ENCODE measurements at regions of chr6 and their contacts with region 1.

Region 1: DNA sequence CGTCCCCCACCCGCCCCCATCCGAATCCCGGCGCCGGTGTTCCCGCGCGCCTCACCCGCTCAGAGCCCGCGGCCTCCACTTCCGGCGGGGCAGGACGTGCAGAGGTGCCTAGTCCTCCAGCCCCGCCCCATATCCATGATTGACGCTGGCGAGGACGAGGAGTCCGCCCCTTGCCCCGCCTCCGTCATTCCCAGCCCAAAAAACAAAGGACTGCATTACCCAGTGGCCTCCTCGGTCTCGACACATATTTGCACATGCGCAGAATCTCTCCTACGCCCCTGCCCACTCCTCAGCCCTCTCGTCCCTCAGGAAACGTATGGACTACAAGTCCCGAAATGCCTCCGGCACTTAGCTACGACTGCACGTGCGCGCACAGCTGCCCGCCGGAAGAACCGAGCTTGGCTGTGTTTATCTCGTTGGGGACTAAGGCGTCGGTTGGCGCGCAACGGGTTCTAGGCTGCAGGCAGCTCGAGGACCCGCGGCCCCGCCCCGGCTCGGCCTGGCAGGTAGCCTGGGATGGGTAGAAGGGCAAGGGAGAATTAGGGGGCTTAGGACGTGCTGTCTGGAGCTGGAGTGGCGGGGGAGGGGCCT is at the starts of genes KLHDC3 and MEA1:
- DNase-seq: peak; percentile 100
- H3K4me3 Mint-ChIP-seq: peak within 1 kb of the TSS; percentile 93
- H3K27ac Mint-ChIP-seq: peak within 1 kb of the TSS; percentile 82
- H3K4me1 Mint-ChIP-seq: peaks cover 62% of the 10 kb centered on the region
- H3K27me3 Mint-ChIP-seq: no peaks in the 10 kb centered on the region
- total RNA-seq, gene KLHDC3: 64.6 to 68.7 TPM
- total RNA-seq, gene MEA1: 56.6 to 60.6 TPM

Region 2: GRCh38 chr6:42978839-42979522 is 35.0 kb before region 1 on chr6 and contains the start of gene PEX6:
- CTCF ChIA-PET with region 1: interaction called, 9 read pairs
- POLR2A ChIA-PET with region 1: interaction called, 40 read pairs
- DNase-seq: peak; percentile 97
- H3K4me3 Mint-ChIP-seq: peak within 1 kb of the TSS; percentile 88
- H3K27ac Mint-ChIP-seq: peak within 1 kb of the TSS; percentile 99
- H3K4me1 Mint-ChIP-seq: peaks cover 51% of the 10 kb centered on the region
- H3K27me3 Mint-ChIP-seq: no peaks in the 10 kb centered on the region
- total RNA-seq, gene PEX6: 27.4 to 29.1 TPM

Region 3: GRCh38 chr6:42984001-42984923 is 29.7 kb before region 1 on chr6 and contains the start of gene PPP2R5D:
- CTCF ChIA-PET with region 1: interaction called, 9 read pairs
- POLR2A ChIA-PET with region 1: interaction called, 40 read pairs
- DNase-seq: peak; percentile 99
- H3K4me3 Mint-ChIP-seq: peak within 1 kb of the TSS; percentile 88
- H3K27ac Mint-ChIP-seq: peak within 1 kb of the TSS; percentile 82
- H3K4me1 Mint-ChIP-seq: peaks cover 55% of the 10 kb centered on the region
- H3K27me3 Mint-ChIP-seq: no peaks in the 10 kb centered on the region
- total RNA-seq, gene PPP2R5D: 56.8 to 59.3 TPM

Region 4: DNA sequence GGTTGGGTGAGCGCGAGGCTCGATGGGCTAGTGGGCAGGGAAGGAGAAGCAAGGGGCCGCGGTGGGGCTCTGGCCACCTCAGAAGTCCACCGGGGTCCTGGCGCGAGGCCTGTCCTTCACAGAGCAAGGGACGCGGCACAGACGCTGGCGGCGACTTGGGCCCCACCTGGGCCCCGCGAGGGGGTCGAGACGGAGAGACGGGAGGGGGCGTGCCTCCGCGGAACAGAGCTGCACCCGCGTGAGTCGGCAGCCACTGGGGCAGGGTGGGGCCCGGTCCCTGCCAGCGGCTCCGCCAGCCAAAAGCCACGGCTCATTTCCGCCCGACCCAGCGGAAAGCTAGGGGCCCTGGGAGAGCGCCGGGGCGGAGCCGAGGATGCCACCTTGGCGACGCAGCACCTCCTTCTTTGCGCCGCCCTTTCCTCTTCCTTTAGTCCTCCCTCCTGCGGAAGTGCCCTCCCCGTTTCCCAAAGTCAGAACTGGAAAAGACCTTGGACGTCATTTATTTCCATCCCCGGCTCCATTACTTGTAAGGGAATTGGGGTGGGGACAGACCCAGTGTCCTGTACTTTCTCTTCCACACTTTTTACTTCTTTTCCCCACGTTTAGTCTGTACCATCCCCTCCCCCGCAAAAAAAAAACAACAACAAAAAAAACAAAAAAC is 39.7 kb after region 1 on chr6 and contains the start of gene CUL7:
- CTCF ChIA-PET with region 1: interaction called, 5 read pairs
- POLR2A ChIA-PET with region 1: interaction called, 18 read pairs
- DNase-seq: peak; percentile 95
- H3K4me3 Mint-ChIP-seq: peak within 1 kb of the TSS; percentile 96
- H3K27ac Mint-ChIP-seq: peak within 1 kb of the TSS; percentile 93
- H3K4me1 Mint-ChIP-seq: peaks cover 54% of the 10 kb centered on the region
- H3K27me3 Mint-ChIP-seq: no peaks in the 10 kb centered on the region
- total RNA-seq, gene CUL7: 12.7 to 13.0 TPM

Region 5: GRCh38 chr6:43059168-43060033 is 45.5 kb after region 1 on chr6 and contains the starts of genes KLC4 and MRPL2:
- CTCF ChIA-PET with region 1: no interaction called
- POLR2A ChIA-PET with region 1: interaction called, 18 read pairs
- DNase-seq: peak; percentile 99
- H3K4me3 Mint-ChIP-seq: peak within 1 kb of the TSS; percentile 86
- H3K27ac Mint-ChIP-seq: peak within 1 kb of the TSS; percentile 88
- H3K4me1 Mint-ChIP-seq: peaks cover 41% of the 10 kb centered on the region
- H3K27me3 Mint-ChIP-seq: no peaks in the 10 kb centered on the region
- total RNA-seq, gene KLC4: 19.3 to 20.3 TPM
- total RNA-seq, gene MRPL2: 46.8 to 57.8 TPM

Measured in activated CD4-positive, alpha-beta memory T cell treated with anti-CD3 and anti-CD28 coated beads, Interleukin-2, amount 10 ng/mL, durations not matched to agents 7 days and 5 days (primary cell).